Stomach (tissue), 19 donors: ENCODE measurements at regions of chr20 and their contacts with region 1.

Region 1: GRCh38 chr20:52619101-52619500 is 353.1 kb upstream of the TSHZ2 start:
- DNase-seq: peak in 1 of 2 donors; percentile 36
- H3K4me3 ChIP-seq: no peak overlapping the region
- H3K27ac ChIP-seq: no peak overlapping the region
- H3K4me1 ChIP-seq: no peaks in the 10 kb centered on the region
- H3K27me3 ChIP-seq: no peaks in the 10 kb centered on the region
- CTCF ChIP-seq: no peak
- EP300 ChIP-seq: no peak
- POLR2A ChIP-seq: no peak

Region 2: GRCh38 chr20:52552181-52552872 is 66.8 kb before region 1 on chr20:
- intact Hi-C with region 1: loop called (anchors 10 kb)
- DNase-seq: no peak
- H3K4me3 ChIP-seq: no peak overlapping the region
- H3K27ac ChIP-seq: no peak overlapping the region
- H3K4me1 ChIP-seq: no peaks in the 10 kb centered on the region
- H3K27me3 ChIP-seq: no peaks in the 10 kb centered on the region
- CTCF ChIP-seq: no peak
- EP300 ChIP-seq: no peak
- POLR2A ChIP-seq: no peak

Region 3: DNA sequence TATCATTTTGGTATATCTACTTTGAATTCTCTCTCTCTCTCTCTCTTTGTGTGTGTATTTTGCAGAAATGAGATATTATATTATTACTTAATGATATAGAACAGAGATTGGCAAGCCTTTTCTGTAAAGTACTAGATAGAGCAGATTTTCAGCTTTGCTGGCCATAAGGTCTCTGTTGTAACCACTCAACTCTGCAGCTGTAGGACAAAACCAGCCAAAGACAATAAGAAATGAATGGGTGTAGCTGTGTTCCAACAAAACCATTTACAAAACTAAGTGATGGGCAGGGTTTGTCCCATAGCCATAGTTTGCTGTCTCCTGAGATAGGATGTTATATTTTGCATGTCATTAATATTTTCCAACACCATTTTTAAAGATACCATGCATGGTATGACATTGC is 261.9 kb after region 1 on chr20:
- intact Hi-C with region 1: no loop called
- DNase-seq: no peak
- H3K4me3 ChIP-seq: no peak overlapping the region
- H3K27ac ChIP-seq: no peak overlapping the region
- H3K4me1 ChIP-seq: no peaks in the 10 kb centered on the region
- H3K27me3 ChIP-seq: no peaks in the 10 kb centered on the region
- CTCF ChIP-seq: no peak
- EP300 ChIP-seq: no peak
- POLR2A ChIP-seq: no peak